Vagina (tissue), 2 donors: ENCODE measurements at regions of chr1 and their contacts with region 1.

Region 1: DNA sequence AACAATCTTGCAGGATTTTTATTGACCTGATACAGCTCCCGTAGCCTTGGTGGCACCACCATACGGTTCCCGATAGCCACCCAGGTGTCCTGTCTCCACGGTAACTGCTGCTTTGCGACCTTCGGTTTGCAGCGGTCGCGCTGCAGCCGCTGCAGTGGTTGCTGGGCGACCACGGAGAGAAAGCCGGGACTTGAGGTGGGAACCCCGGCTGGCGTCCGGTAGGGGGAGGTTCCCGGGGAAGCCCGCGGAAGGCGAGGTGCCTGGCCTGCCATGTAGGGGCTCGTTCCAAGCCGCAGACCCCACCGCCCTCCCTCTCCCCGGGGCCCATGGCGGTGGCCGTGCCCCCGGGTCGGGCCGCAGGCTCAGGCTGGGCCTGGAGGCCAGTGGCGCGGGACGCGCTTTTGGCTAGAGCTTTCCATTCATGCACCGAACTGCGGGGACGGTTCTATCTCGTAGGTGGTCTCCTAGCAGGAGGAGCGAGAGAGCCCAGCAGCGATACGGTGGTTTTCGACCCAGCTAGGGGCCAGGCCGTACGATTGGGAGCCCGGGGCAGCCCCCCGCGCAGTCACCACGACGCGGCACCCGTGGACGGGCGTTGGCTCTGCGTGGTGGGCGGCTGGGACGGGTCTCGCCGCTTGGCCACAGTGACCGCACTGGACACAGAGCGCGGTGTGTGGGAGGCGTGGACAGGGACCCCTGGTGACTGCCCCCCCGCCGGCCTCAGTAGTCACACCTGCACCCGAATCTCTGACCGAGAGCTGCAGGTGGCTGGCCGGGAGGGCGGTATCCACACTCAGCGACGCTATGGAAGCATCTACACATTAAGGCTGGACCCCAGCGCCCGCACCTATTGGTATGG is at the start of gene KLHDC9:
- DNase-seq: no peak
- H3K4me3 ChIP-seq: peak within 1 kb of the TSS; percentile 43 to 52
- H3K27ac ChIP-seq: peak within 1 kb of the TSS; percentile 31
- H3K4me1 ChIP-seq: peaks cover 16% of the 10 kb centered on the region
- H3K27me3 ChIP-seq: no peaks in the 10 kb centered on the region
- CTCF ChIP-seq: peak in 1 of 3 experiments; percentile 4
- POLR2A ChIP-seq: no peak
- total RNA-seq, gene KLHDC9: 9.3 TPM

Region 2: GRCh38 chr1:160997323-160998038 is 101.0 kb before region 1 on chr1:
- intact Hi-C with region 1: loop called (anchors 10 kb)
- DNase-seq: no peak
- H3K4me3 ChIP-seq: no peak overlapping the region
- H3K27ac ChIP-seq: no peak overlapping the region
- H3K4me1 ChIP-seq: peaks cover 5% of the 10 kb centered on the region
- H3K27me3 ChIP-seq: no peaks in the 10 kb centered on the region
- CTCF ChIP-seq: peak in 1 of 3 experiments; percentile 44
- POLR2A ChIP-seq: no peak

Region 3: DNA sequence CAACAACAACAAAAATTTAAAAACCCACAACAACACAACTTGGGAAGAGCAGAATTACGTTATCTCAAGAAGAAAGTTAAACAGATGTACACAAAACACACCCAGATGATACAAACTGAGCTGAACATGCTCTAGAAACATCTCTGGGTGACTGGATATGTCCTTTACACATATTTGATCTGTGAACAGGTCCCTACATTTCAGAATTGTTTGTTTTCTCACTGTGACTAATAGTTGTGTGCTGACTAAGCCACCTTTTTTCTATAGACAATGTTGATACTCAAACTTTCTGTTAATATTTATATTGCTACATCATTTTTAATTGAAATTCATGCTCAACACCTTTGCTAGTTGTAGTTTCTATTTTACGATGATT is 76.5 kb before region 1 on chr1:
- intact Hi-C with region 1: no loop called
- DNase-seq: no peak
- H3K4me3 ChIP-seq: no peak overlapping the region
- H3K27ac ChIP-seq: peak overlapping the region; percentile 89
- H3K4me1 ChIP-seq: peaks cover 21% of the 10 kb centered on the region
- H3K27me3 ChIP-seq: no peaks in the 10 kb centered on the region
- CTCF ChIP-seq: no peak
- POLR2A ChIP-seq: no peak

Region 4: DNA sequence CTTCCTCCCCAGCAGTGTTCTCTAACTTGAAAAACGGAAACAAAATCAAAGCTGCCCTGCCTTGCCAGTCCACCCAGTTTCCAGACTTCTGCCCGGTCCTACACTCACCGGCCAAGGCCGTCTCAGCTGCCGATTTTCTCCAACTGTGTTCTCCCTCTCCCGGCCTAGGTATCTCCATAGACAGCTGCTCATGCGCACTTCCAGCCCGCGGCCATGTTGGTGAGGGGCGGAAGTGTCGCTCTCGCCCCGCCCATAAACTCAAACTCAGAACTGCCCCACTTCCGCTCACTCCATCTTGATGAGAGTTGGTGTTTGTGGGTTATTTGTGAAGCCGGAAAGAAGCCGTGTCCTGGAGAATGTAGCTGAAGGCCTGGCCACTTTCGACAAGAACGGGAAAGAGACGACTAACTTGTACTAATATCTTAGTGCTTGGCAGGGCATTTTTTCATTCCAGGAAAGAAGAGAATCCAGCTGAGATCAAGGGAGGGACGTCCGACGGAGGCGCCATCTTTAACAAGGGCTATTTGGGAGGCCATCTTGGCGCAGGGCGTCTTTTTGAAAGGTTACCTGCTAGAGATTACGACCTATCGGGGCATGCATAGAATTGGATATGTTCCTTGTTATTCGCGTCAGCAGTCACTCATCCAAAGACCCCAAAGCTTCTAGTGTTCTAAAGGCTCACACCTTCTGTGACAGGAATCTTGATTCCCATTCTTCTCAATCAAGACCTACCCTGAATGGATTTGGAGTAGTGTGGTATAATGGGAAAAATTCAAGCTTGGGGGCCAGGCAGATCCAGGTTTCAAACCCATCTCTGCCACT is 52.5 kb before region 1 on chr1 and contains the start of gene USF1:
- intact Hi-C with region 1: loop called (anchors 5 kb)
- DNase-seq: peak in 1 of 2 donors; percentile 96
- H3K4me3 ChIP-seq: peak within 1 kb of the TSS; percentile 66 to 79
- H3K27ac ChIP-seq: peak within 1 kb of the TSS; percentile 95
- H3K4me1 ChIP-seq: peaks cover 23% of the 10 kb centered on the region
- H3K27me3 ChIP-seq: no peaks in the 10 kb centered on the region
- CTCF ChIP-seq: no peak
- POLR2A ChIP-seq: peak in 1 of 2 donors; percentile 75
- total RNA-seq, gene USF1: 39.0 TPM